Activated naive CD4-positive, alpha-beta T cell treated with anti-CD3 and anti-CD28 coated beads for 36 hours (primary cell): ENCODE measurements at regions of chr2 and their contacts with region 1.

Region 1: DNA sequence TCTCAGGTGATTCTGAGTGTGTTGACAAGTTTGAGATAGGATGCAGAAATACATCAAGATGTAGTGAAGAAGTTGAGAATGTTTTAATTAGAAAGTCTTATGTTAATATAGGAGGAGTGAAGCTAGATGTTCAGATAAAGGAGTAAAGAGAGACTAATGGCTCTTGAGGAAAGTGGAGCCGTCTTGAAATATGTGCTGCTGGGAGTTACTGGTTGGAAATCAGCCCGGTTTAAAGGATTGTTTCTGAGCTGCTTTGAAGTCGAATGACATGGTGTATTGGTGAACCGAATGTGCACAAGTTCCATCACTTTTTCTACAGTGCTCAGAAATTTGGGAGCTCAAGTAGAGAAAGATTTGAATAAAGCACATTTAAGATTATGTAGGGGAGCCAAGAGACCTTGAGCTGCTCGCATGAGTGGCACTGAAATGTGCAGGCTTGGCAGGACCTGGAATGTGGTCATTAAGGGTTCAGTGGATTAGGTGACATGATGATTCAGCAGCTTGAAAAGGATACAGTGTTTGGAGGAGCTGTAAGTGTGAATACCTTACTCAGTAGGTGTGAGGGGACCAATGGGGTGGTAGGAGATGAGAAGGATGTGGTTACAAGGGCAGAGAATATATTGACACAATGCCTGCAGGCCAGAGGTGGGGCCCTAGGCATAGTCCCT is 68.6 kb downstream of the CAB39 start:
- DNase-seq: peak; percentile 80
- H3K4me3 Mint-ChIP-seq: no peak overlapping the region
- H3K27ac Mint-ChIP-seq: peak overlapping the region; percentile 79
- H3K4me1 Mint-ChIP-seq: peaks cover 78% of the 10 kb centered on the region
- H3K27me3 Mint-ChIP-seq: no peaks in the 10 kb centered on the region

Region 2: DNA sequence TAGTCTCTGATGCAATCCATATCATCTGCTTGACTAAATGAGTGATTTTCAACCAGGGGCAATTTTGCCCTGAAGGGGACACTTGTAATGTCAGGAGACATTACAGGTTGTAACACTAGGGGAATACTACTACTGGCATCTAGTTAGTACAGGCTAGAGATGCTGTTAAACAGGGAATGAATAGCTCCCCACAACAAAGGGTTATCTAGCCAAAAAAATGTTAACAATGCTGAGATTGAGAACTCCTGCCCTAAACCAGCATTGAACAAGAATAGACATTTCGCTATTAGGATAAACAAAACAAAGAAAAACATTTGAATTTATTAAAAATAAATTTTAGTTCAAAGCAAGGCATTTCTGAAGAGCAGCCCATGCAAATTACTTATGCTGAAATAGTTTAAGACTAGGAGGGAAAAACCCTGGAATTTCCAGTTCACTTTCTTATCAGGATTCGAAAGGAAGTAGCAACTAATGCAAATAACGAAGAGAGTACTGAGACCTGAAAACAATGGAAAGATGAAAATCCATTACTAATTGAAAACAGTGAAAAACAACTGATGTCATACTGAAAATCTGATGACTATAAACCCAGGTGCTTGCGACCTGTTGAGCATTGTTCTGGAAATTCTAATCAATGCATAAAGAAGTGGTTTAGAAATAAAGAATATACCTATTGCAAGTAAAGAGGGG is 15.5 kb before region 1 on chr2:
- CTCF ChIA-PET with region 1: interaction called, 7 read pairs
- intact Hi-C with region 1: loop called (anchors 1 kb)
- DNase-seq: no peak
- H3K4me3 Mint-ChIP-seq: no peak overlapping the region
- H3K27ac Mint-ChIP-seq: peak overlapping the region; percentile 85
- H3K4me1 Mint-ChIP-seq: peaks cover 64% of the 10 kb centered on the region
- H3K27me3 Mint-ChIP-seq: no peaks in the 10 kb centered on the region